ENCODE measurements at regions of chr4 and their contacts with region 1.

Region 1: DNA sequence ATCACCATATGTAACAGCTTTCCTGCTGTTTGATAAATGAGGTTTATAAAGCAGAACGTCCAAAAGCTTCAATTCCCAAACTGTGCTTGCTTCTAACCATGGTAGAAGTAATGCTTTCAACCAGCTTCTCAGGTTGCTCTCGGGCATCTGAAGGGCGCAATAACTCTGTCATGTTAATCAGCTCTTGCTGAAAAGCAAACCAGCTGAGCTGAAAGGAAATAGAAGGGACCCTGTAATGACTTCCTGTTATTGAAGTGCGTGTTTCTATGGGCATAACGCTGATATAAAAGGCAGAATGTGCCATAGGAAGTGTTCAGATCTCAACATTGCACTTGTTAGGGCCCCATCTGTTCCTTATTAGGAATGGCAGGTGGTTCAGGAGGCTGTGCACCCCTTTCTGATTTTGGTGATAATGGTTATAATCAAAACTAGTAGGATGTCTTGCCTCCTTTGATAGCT is 21.2 kb downstream of the HERC3 start:
- DNase-seq: no peak
- ATAC-seq: no peak
- H3K4me3 ChIP-seq: no peak overlapping the region
- H3K27ac ChIP-seq: no peak overlapping the region
- H3K4me1 ChIP-seq: peaks cover 19% of the 10 kb centered on the region
- H3K27me3 ChIP-seq: no peaks in the 10 kb centered on the region
- CTCF ChIP-seq: no peak
- EP300 ChIP-seq: no peak
- POLR2A ChIP-seq: no peak
- RAD21 ChIP-seq: no peak

Region 2: GRCh38 chr4:88503344-88503743 is 110.1 kb before region 1 on chr4:
- CTCF ChIA-PET with region 1: no interaction called
- POLR2A ChIA-PET with region 1: no interaction called
- RAD21 ChIA-PET with region 1: no interaction called
- SMC1A ChIA-PET with region 1: no interaction called
- in situ Hi-C with region 1: no loop called
- intact Hi-C with region 1: no loop called
- DNase-seq: no peak
- ATAC-seq: no peak
- H3K4me3 ChIP-seq: no peak overlapping the region
- H3K27ac ChIP-seq: no peak overlapping the region
- H3K4me1 ChIP-seq: no peaks in the 10 kb centered on the region
- H3K27me3 ChIP-seq: no peaks in the 10 kb centered on the region
- CTCF ChIP-seq: no peak
- EP300 ChIP-seq: no peak
- POLR2A ChIP-seq: no peak
- RAD21 ChIP-seq: no peak

Region 3: GRCh38 chr4:88591787-88592599 is 21.5 kb before region 1 on chr4 and contains the start of gene HERC3:
- CTCF ChIA-PET with region 1: interaction called, 3 read pairs
- POLR2A ChIA-PET with region 1: no interaction called
- RAD21 ChIA-PET with region 1: interaction called, 3 read pairs
- SMC1A ChIA-PET with region 1: interaction called, 10 read pairs
- in situ Hi-C with region 1: no loop called
- intact Hi-C with region 1: no loop called
- DNase-seq: peak; percentile 46
- ATAC-seq: peak; percentile 99
- H3K4me3 ChIP-seq: peak within 1 kb of the TSS; percentile 88
- H3K27ac ChIP-seq: no peak within 1 kb of the TSS
- H3K4me1 ChIP-seq: no peaks in the 10 kb centered on the region
- H3K27me3 ChIP-seq: no peaks in the 10 kb centered on the region
- CTCF ChIP-seq: 0 out of 6 replicates have a peak, but pooled peaks of 1 of the 3 experiments have one; percentile 3
- EP300 ChIP-seq: no peak
- POLR2A ChIP-seq: peak; percentile 63
- RAD21 ChIP-seq: no peak
- polyA plus RNA-seq, gene HERC3: 0.52 to 0.82 TPM

Region 4: GRCh38 chr4:88600176-88600838 is 13.1 kb before region 1 on chr4:
- CTCF ChIA-PET with region 1: interaction called, 3 read pairs
- POLR2A ChIA-PET with region 1: interaction called, 5 read pairs
- RAD21 ChIA-PET with region 1: no interaction called
- SMC1A ChIA-PET with region 1: interaction called, 24 read pairs
- in situ Hi-C with region 1: no loop called
- intact Hi-C with region 1: no loop called
- DNase-seq: no peak
- ATAC-seq: no peak
- H3K4me3 ChIP-seq: no peak overlapping the region
- H3K27ac ChIP-seq: no peak overlapping the region
- H3K4me1 ChIP-seq: no peaks in the 10 kb centered on the region
- H3K27me3 ChIP-seq: no peaks in the 10 kb centered on the region
- CTCF ChIP-seq: no peak
- EP300 ChIP-seq: no peak
- POLR2A ChIP-seq: no peak
- RAD21 ChIP-seq: no peak

Region 5: DNA sequence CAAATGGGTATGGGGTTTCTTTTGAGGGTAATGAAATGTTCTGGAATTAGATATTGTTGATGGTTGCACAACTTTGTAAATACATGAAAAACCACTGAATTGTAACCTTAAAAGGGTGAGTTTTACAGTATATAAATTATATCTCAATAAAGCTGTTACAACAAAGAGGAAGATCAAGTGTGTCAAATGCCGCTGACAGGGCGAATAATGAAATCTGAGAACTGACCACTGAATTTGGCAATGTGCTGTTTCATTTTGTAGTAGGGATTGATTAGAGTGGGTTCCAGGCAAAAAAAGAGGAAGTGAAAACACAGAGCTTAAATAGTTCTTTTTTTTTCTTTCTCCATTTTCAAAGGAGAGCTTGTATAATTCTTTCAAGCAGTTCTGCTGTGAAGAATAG is 245.3 kb after region 1 on chr4:
- CTCF ChIA-PET with region 1: no interaction called
- POLR2A ChIA-PET with region 1: no interaction called
- RAD21 ChIA-PET with region 1: no interaction called
- SMC1A ChIA-PET with region 1: no interaction called
- in situ Hi-C with region 1: no loop called
- intact Hi-C with region 1: no loop called
- DNase-seq: peak; percentile 61
- ATAC-seq: peak; percentile 96
- H3K4me3 ChIP-seq: no peak overlapping the region
- H3K27ac ChIP-seq: no peak overlapping the region
- H3K4me1 ChIP-seq: peaks cover 6% of the 10 kb centered on the region; the same call in 1 of the 2 replicates
- H3K27me3 ChIP-seq: no peaks in the 10 kb centered on the region
- CTCF ChIP-seq: no peak
- EP300 ChIP-seq: peak in 1 of 2 experiments; percentile 71; a peak in 2 of 4 replicates
- POLR2A ChIP-seq: no peak
- RAD21 ChIP-seq: no peak